MCF 10A (cell line): ENCODE measurements at regions of chr16 and their contacts with region 1.

Region 1: DNA sequence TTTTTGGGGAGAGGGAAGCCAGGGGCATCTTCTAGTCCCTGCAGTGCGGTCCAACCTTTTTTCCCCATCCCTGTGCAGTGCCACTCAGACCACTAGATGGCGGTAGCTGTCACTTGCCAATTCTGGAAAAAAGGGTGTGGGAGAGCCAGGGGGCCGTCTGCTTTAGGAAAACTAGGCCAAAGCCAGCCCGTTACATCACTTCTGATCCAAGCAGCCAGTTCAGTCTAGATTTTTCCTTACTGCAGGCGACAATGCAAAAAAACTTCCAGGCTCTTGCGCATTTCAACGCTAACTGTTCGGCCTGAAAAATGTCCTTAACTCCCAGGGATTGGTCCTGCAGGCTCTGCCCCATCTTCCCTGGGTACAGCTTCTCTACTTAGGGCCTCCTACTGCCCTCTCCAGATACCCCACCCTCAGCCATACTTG is 69.2 kb upstream of the CES5A start:
- DNase-seq: peak; percentile 70
- H3K4me3 Mint-ChIP-seq: no peak overlapping the region
- H3K27ac Mint-ChIP-seq: no peak overlapping the region
- H3K4me1 Mint-ChIP-seq: peaks cover 6% of the 10 kb centered on the region
- H3K27me3 Mint-ChIP-seq: peaks cover 68% of the 10 kb centered on the region
- CTCF ChIP-seq: peak; percentile 88

Region 2: DNA sequence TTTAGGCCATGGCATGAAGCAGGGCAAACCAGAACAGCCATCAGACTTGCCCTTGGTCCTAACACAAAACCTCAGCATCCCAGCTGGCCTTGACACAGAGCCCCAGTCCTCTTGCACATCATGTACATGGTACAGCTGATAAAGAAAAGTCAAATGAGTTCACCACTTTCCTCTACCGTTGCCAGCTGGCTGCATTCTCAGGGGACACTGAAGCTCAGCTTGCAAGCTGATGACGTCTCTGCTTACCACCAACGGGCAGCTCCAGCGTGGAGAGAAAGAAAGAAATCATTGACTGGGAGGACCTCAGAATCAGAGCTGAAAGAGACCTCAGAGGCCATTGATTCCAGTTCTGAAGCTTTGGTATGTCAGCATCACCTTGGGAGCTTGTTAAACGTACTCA is 11.5 kb after region 1 on chr16:
- CTCF ChIA-PET with region 1: interaction called, 38 read pairs
- POLR2A ChIA-PET with region 1: interaction called, 3 read pairs
- intact Hi-C with region 1: no loop called
- DNase-seq: no peak
- H3K4me3 Mint-ChIP-seq: no peak overlapping the region
- H3K27ac Mint-ChIP-seq: no peak overlapping the region
- H3K4me1 Mint-ChIP-seq: no peaks in the 10 kb centered on the region
- H3K27me3 Mint-ChIP-seq: peaks cover 64% of the 10 kb centered on the region
- CTCF ChIP-seq: no peak

Region 3: GRCh38 chr16:56057151-56057550 is 112.8 kb after region 1 on chr16:
- CTCF ChIA-PET with region 1: no interaction called
- POLR2A ChIA-PET with region 1: no interaction called
- intact Hi-C with region 1: no loop called
- DNase-seq: no peak
- H3K4me3 Mint-ChIP-seq: no peak overlapping the region
- H3K27ac Mint-ChIP-seq: no peak overlapping the region
- H3K4me1 Mint-ChIP-seq: no peaks in the 10 kb centered on the region
- H3K27me3 Mint-ChIP-seq: peaks cover 97% of the 10 kb centered on the region
- CTCF ChIP-seq: no peak

Region 4: GRCh38 chr16:56203052-56203451 is 258.7 kb after region 1 on chr16:
- CTCF ChIA-PET with region 1: interaction called, 3 read pairs
- POLR2A ChIA-PET with region 1: no interaction called
- intact Hi-C with region 1: loop called (anchors 5 kb)
- DNase-seq: peak; percentile 70
- H3K4me3 Mint-ChIP-seq: no peak overlapping the region
- H3K27ac Mint-ChIP-seq: no peak overlapping the region
- H3K4me1 Mint-ChIP-seq: no peaks in the 10 kb centered on the region
- H3K27me3 Mint-ChIP-seq: peaks cover 11% of the 10 kb centered on the region
- CTCF ChIP-seq: peak; percentile 23

Region 5: DNA sequence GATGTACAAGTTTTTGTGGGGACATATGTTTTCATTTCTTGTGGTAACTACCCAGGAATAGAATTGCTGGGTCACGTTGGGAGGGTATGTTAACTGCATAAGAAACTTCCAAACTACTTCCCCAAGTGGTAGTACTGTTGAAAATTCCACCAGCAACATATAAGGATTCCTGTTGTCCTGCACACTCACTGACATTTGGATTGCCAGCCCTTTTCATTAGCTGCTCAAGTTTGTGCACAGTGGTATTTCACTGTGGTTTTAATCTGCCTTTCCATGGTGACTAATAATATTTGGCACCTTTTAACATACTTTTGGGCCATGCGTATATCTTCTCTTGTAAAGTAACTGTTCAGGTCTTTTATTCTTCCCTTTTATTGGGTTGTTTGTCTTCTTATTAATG is 350.2 kb after region 1 on chr16:
- CTCF ChIA-PET with region 1: interaction called, 11 read pairs
- POLR2A ChIA-PET with region 1: no interaction called
- intact Hi-C with region 1: no loop called
- DNase-seq: peak; percentile 33
- H3K4me3 Mint-ChIP-seq: no peak overlapping the region
- H3K27ac Mint-ChIP-seq: no peak overlapping the region
- H3K4me1 Mint-ChIP-seq: peaks cover 15% of the 10 kb centered on the region
- H3K27me3 Mint-ChIP-seq: no peaks in the 10 kb centered on the region
- CTCF ChIP-seq: no peak

Region 6: DNA sequence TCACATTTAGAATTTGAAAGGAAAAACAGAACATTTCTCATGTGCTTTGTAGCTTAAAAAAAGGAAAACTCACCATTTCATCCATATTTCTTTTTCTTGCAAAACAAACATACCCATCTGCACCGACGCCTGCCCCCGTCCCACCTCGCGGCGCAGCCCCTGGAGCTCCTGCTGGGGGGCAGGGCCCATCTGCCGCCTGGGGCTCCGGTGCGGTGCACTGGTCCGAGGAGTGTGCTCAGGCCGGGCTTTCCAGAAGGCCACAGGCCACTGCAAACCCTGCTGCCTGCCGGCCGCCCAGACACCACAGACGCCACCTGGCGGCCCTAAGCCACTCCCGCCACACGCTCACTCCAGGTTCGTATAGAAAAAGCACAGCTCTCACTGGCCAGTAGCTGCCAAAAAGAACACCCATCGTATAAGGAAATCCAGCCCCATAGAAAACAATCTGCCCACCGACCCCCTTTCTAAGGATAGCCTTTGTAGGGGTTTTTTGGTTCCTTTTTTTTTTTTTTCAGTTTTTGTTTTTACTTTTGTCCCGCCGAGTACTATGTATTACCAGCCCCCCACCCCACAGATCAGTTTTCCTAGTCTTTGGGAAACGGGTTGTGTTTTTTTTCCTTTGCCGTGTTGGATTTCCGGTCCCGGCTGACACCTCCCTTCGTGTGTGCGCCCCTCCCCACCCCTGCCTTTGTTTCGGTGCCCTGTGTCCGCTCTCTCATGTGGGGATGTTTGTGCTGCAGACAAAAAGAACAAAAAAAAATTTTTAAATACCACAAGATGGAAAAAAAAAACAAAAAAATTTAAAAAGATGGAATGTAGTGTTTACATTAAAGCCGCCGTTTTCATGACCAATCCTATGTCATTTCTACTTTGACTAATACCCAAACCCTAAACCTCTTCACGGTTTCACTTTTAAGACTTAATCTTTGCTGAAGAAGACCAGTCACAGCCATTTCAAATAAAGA is 412.2 kb after region 1 on chr16:
- CTCF ChIA-PET with region 1: interaction called, 19 read pairs
- POLR2A ChIA-PET with region 1: interaction called, 3 read pairs
- intact Hi-C with region 1: no loop called
- DNase-seq: peak; percentile 83
- H3K4me3 Mint-ChIP-seq: peak overlapping the region; percentile 46
- H3K27ac Mint-ChIP-seq: no peak overlapping the region
- H3K4me1 Mint-ChIP-seq: peaks cover 8% of the 10 kb centered on the region
- H3K27me3 Mint-ChIP-seq: peaks cover 10% of the 10 kb centered on the region
- CTCF ChIP-seq: peak; percentile 76